ENCODE measurements at regions of chr15 and their contacts with region 1.

Region 1: GRCh38 chr15:63466378-63467192 is 37.8 kb upstream of the USP3 start:
- DNase-seq: no peak
- H3K4me3 ChIP-seq: no peak overlapping the region
- CTCF ChIP-seq: peak; percentile 57

Region 2: GRCh38 chr15:63015618-63016017 is 451.0 kb before region 1 on chr15:
- CTCF ChIA-PET with region 1: no interaction called
- POLR2A ChIA-PET with region 1: no interaction called
- DNase-seq: no peak
- H3K4me3 ChIP-seq: no peak overlapping the region
- CTCF ChIP-seq: no peak

Region 3: GRCh38 chr15:63238796-63239195 is 227.8 kb before region 1 on chr15:
- CTCF ChIA-PET with region 1: no interaction called
- POLR2A ChIA-PET with region 1: no interaction called
- DNase-seq: no peak
- H3K4me3 ChIP-seq: no peak overlapping the region
- CTCF ChIP-seq: no peak

Region 4: GRCh38 chr15:63288778-63289378 is 177.7 kb before region 1 on chr15:
- CTCF ChIA-PET with region 1: interaction called, 23 read pairs
- POLR2A ChIA-PET with region 1: no interaction called
- DNase-seq: no peak
- H3K4me3 ChIP-seq: no peak overlapping the region
- CTCF ChIP-seq: peak; percentile 39

Region 5: GRCh38 chr15:63436872-63437375 is 29.7 kb before region 1 on chr15:
- CTCF ChIA-PET with region 1: interaction called, 18 read pairs
- POLR2A ChIA-PET with region 1: no interaction called
- DNase-seq: peak; percentile 37
- H3K4me3 ChIP-seq: no peak overlapping the region
- CTCF ChIP-seq: no peak

Region 6: DNA sequence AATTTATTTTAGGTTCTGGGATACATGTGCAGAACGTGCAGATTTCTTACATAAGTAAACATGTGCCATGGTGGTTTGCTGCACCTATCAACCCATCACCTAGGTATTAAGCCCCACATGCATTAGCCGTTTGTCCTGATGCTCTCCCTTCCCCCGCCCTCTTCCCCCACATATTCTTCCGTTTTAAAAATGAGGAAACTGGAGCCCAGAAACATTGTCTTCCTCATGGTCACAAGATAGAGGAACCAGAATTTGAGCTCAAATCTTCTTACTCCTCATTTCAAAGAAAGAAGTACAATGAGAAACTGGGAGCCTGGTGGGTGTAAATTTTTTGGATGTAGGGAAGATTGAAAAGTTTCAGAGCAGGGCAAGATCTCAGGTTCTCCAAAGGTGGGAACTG is 18.3 kb before region 1 on chr15:
- CTCF ChIA-PET with region 1: interaction called, 10 read pairs
- POLR2A ChIA-PET with region 1: no interaction called
- DNase-seq: no peak
- H3K4me3 ChIP-seq: no peak overlapping the region
- CTCF ChIP-seq: no peak

Region 7: GRCh38 chr15:63481105-63481810 is 14.7 kb after region 1 on chr15:
- CTCF ChIA-PET with region 1: interaction called, 46 read pairs
- POLR2A ChIA-PET with region 1: no interaction called
- DNase-seq: no peak
- H3K4me3 ChIP-seq: no peak overlapping the region
- CTCF ChIP-seq: no peak

Region 8: DNA sequence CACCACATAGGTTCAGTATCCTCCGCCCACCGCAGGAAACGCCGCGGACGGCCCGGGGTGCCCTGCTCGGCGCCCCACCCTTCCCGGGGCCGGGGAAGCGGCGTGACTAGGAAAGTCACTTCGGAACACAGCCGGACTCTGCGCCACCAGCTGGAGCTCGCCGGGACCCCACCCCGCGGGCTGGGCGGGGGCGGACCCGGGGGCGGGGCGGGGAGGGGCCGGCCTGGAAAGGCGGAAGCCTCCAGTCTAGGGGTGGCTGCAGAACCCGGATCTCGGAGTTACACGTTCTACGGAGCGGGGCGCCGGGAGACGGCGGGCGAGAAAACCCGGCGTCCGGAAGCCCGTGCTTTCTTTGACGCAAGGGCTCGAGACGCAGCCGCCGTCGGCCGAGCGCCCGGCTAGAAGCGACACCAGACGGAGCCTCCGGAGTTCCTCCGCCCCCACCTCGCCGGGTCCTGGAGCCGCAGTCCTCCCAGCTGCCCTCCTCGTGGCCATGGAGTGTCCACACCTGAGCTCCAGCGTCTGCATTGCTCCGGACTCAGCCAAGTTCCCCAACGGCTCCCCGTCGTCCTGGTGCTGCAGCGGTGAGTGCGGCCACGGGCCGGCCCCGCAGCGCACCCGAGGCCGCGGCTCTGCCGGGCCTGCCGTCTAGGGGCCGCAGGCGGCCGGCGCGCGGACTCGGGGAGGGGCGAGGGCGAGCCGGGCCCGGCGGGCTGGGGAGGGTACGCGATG is 37.8 kb after region 1 on chr15 and contains the start of gene USP3:
- CTCF ChIA-PET with region 1: interaction called, 11 read pairs
- POLR2A ChIA-PET with region 1: no interaction called
- DNase-seq: peak; percentile 73
- H3K4me3 ChIP-seq: peak within 1 kb of the TSS; percentile 93
- CTCF ChIP-seq: peak; percentile 48

Region 9: DNA sequence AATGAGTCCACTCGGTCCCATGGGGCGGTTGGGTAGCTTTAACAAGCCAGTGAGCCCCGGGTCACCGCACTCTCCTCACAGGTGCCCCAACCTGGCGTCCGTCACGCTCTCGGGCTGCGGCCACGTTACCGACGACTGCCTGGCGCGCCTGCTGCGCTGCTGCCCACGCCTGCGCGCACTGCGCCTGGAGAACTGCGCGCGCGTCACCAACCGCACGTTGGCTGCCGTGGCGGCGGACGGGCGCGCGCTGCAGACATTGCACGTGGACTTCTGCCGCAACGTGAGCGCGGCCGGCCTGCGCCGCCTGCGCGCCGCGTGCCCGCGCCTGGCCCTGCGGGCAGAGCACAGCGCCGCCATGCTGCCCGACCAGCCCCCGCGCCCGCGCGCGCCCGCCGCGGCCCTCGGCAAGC is 134.0 kb after region 1 on chr15:
- CTCF ChIA-PET with region 1: interaction called, 48 read pairs
- POLR2A ChIA-PET with region 1: no interaction called
- DNase-seq: peak; percentile 23
- H3K4me3 ChIP-seq: peak overlapping the region; percentile 76
- CTCF ChIP-seq: no peak